ENCODE measurements at regions of chr3 and their contacts with region 1.

Region 1: GRCh38 chr3:156808025-156808424 is 18.1 kb upstream of the LEKR1 start:
- DNase-seq: no peak
- ATAC-seq: no peak
- H3K4me3 ChIP-seq: no peak overlapping the region
- H3K27ac ChIP-seq: no peak overlapping the region
- H3K4me1 ChIP-seq: peaks cover 4% of the 10 kb centered on the region
- H3K27me3 ChIP-seq: no peaks in the 10 kb centered on the region
- CTCF ChIP-seq: no peak

Region 2: GRCh38 chr3:156691920-156692319 is 116.1 kb before region 1 on chr3:
- intact Hi-C with region 1: loop called (anchors 10 kb)
- DNase-seq: no peak
- ATAC-seq: no peak
- H3K4me3 ChIP-seq: no peak overlapping the region
- H3K27ac ChIP-seq: no peak overlapping the region
- H3K4me1 ChIP-seq: peaks cover 48% of the 10 kb centered on the region
- H3K27me3 ChIP-seq: no peaks in the 10 kb centered on the region
- CTCF ChIP-seq: no peak

Region 3: GRCh38 chr3:156749244-156749643 is 58.8 kb before region 1 on chr3:
- intact Hi-C with region 1: no loop called
- DNase-seq: no peak
- ATAC-seq: peak; percentile 31
- H3K4me3 ChIP-seq: no peak overlapping the region
- H3K27ac ChIP-seq: no peak overlapping the region
- H3K4me1 ChIP-seq: no peaks in the 10 kb centered on the region
- H3K27me3 ChIP-seq: no peaks in the 10 kb centered on the region
- CTCF ChIP-seq: no peak